Common myeloid progenitor, CD34-positive (primary cell): ENCODE measurements at regions of chr14 and their contacts with region 1.

Region 1: DNA sequence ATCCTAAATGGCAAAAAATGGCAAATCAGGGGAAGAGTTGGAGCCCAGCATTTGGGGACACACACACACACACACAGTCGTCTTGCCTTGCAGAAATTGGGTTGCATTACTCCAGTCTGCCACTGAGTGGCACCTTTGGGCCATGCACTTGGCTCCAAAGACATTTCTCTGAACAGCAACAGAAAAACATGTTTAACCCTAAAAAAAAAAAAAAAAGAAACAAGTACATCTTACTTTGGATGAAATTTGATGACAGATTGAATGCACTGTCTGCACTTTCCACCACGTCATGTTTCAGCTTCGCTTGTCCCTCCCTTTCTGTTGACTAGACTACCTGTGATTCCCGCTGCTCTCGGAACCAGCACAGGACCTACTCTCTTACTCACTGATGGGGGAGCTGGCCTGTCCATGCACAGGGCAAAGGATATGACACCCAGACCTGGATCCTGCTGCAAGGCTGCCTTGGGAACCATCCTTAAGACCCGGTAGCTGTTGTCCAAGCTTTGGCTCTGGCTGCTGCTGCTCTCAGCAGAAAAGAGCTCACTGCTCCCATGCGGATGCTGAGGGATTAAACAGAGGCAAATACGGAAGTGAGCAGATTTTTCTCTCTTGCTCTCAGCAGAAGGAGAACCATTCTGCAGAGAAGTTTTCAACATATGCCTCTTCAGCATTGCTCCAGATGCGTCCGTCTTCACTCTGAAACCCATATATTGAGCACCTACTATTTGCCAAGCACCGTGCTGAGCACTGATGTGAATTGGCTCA is 376.8 kb downstream of the DPF3 start:
- DNase-seq: peak; percentile 86 to 93 (median 89)
- H3K4me3 ChIP-seq: no peak overlapping the region
- H3K27ac ChIP-seq: no peak overlapping the region
- H3K4me1 ChIP-seq: peaks cover 24 to 33% (median 25%) of the 10 kb centered on the region in 4 experiments
- H3K27me3 ChIP-seq: peaks cover 0 to 34% (median 17%) of the 10 kb centered on the region in 5 experiments

Region 2: DNA sequence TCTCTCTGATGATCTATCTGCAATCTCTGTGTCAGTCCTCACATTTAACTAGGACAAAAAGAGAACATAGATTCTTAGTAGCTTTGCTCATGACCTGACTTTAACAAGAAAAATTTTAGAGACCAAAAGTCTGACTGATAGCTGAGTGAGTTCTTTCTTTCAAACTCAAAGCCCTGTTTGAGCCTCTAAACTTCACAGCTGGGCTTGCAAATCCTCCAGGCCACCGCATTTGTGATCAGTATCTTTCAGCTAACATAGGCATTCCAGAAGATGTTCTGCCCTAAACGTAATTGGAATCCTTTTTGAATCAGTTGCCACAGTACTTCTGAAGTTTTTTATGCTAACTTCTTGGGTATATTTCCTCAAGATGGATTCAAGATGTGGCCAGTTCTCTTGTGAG is 82.3 kb before region 1 on chr14:
- CTCF ChIA-PET with region 1: no interaction called
- POLR2A ChIA-PET with region 1: no interaction called
- DNase-seq: no peak
- H3K4me3 ChIP-seq: no peak overlapping the region
- H3K27ac ChIP-seq: no peak overlapping the region
- H3K4me1 ChIP-seq: peaks cover 5 to 17% (median 12%) of the 10 kb centered on the region in 4 experiments
- H3K27me3 ChIP-seq: peaks cover 0 to 10% (median 4%) of the 10 kb centered on the region in 5 experiments

Region 3: GRCh38 chr14:72503696-72504368 is 13.3 kb before region 1 on chr14:
- CTCF ChIA-PET with region 1: interaction called, 16 read pairs
- POLR2A ChIA-PET with region 1: no interaction called
- DNase-seq: no peak
- H3K4me3 ChIP-seq: no peak overlapping the region
- H3K27ac ChIP-seq: no peak overlapping the region
- H3K4me1 ChIP-seq: peaks cover 0 to 6% (median 0%) of the 10 kb centered on the region in 4 experiments
- H3K27me3 ChIP-seq: peaks cover 0 to 2% (median 0%) of the 10 kb centered on the region in 5 experiments

Region 4: DNA sequence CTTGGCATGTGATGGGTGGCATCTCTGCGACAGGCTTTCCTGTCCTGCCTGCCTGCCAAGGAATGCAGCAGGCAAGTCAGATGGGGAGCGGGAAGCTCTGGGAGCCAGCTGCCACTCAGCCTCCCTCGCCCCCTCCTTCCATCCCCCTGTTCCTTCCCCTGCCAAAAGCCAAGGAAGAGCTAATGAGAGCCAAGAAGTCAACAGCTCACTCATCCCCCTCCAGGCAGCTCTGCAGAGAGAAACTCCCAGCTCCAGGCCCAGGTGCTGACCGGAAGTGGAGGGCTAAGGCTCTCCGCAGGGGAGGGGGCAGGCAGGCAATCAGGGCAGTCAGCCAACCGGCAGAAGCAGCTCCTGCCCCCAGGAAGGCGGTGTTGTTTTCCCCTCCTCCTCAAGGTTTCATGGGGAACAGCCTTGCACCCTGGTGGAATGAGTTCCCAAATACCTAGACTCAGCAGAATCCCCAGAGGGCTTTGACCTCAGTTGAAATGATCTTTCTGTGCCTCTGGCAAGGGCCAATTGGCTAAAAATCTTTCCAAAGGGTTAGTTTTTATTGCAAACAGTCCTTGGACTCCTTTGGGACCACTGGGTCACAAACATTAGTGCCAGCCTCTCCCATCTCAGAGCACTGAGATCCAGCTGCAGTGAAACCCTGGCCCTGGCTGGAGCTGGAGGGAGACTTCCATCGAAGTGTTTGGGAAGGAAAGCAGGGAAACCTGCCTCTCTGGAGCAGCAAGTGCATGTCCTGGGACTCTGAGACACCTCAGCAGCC is 27.7 kb after region 1 on chr14:
- CTCF ChIA-PET with region 1: interaction called, 16 read pairs
- POLR2A ChIA-PET with region 1: no interaction called
- DNase-seq: no peak
- H3K4me3 ChIP-seq: no peak overlapping the region
- H3K27ac ChIP-seq: no peak overlapping the region
- H3K4me1 ChIP-seq: peaks cover 0 to 11% (median 7%) of the 10 kb centered on the region in 4 experiments
- H3K27me3 ChIP-seq: peaks cover 0 to 87% (median 29%) of the 10 kb centered on the region in 5 experiments

Region 5: GRCh38 chr14:72904840-72905561 is 387.9 kb after region 1 on chr14:
- CTCF ChIA-PET with region 1: interaction called, 171 read pairs
- POLR2A ChIA-PET with region 1: no interaction called
- DNase-seq: peak; percentile 68 to 82 (median 80)
- H3K4me3 ChIP-seq: no peak overlapping the region
- H3K27ac ChIP-seq: no peak overlapping the region
- H3K4me1 ChIP-seq: no peaks in the 10 kb centered on the region
- H3K27me3 ChIP-seq: peaks cover 0 to 51% (median 14%) of the 10 kb centered on the region in 5 experiments

Region 6: GRCh38 chr14:72948481-72949138 is 431.5 kb after region 1 on chr14:
- CTCF ChIA-PET with region 1: interaction called, 88 read pairs
- POLR2A ChIA-PET with region 1: no interaction called
- DNase-seq: peak; percentile 48 to 74 (median 61)
- H3K4me3 ChIP-seq: no peak overlapping the region
- H3K27ac ChIP-seq: no peak overlapping the region
- H3K4me1 ChIP-seq: peaks cover 0 to 3% (median 0%) of the 10 kb centered on the region in 4 experiments
- H3K27me3 ChIP-seq: no peaks in the 10 kb centered on the region